HEK293 (cell line): ENCODE measurements at regions of chr1 and their contacts with region 1.

Region 1: GRCh38 chr1:160205242-160206035 is at the start of gene PEA15:
- H3K4me3 ChIP-seq: peak within 1 kb of the TSS; percentile 70
- H3K27ac ChIP-seq: peak within 1 kb of the TSS; percentile 82
- H3K4me1 ChIP-seq: 0 out of 2 replicates have a peak, but pooled peaks cover 2% of the 10 kb centered on the region
- CTCF ChIP-seq: 0 out of 2 replicates have a peak, but pooled peaks have one; percentile 16

Region 2: GRCh38 chr1:160219062-160219929 is 13.9 kb after region 1 on chr1:
- CTCF ChIA-PET with region 1: interaction called, 11 read pairs
- POLR2A ChIA-PET with region 1: interaction called, 4 read pairs
- H3K4me3 ChIP-seq: no peak overlapping the region
- H3K27ac ChIP-seq: no peak overlapping the region; the same call in 1 of the 2 replicates
- H3K4me1 ChIP-seq: no peaks in the 10 kb centered on the region
- CTCF ChIP-seq: peak; percentile 69; the same call in 1 of the 2 replicates